Motor neuron (in vitro differentiated cells): ENCODE measurements at regions of chr18 and their contacts with region 1.

Region 1: DNA sequence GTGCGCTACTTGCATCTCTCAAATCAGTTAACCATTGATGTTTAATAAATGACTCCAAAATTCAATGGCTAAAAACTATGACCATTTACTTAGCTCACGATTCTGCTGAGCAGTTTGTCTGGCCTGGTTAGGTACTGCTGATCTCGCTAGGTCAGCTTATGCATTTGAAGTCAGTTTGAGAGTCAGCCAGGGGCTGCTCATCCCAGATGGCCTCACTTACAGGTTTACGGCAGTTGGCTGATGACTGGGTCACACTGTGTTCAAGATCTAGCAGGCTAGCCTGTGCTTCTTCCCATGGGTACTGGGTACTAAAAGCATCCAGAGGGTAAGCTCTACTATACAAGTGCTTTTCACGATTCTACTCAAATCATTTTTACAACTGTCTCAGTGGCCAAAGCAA is 122.1 kb downstream of the DLGAP1 start:
- ATAC-seq: no peak
- H3K4me3 ChIP-seq: no peak overlapping the region
- H3K27ac ChIP-seq: no peak overlapping the region
- H3K4me1 ChIP-seq: no peaks in the 10 kb centered on the region

Region 2: DNA sequence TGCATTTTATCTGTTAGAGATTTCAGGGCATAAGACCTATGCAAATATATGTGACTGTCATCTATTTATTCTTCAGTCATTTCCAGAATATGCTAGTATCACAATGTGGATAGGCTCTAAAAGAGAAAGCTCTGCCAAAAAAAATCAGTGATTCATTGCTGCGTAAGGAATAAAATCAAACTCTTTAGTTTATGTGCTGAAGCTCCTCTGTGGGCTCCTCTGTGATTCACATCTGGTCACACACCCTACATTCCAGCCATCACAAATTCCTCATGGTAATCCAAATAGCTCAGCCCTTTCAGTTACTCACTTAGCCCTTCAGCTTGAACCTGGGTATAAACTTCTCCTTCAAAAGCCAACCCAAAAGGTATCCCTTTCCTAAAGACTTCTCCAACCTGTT is 100.7 kb after region 1 on chr18:
- in situ Hi-C with region 1: loop called in 1 of 9 experiments (anchors 25 kb)
- ATAC-seq: peak in 2 of 8 experiments; percentile 61 to 78
- H3K4me3 ChIP-seq: no peak overlapping the region
- H3K27ac ChIP-seq: no peak overlapping the region
- H3K4me1 ChIP-seq: no peaks in the 10 kb centered on the region